Activated T-helper 1 cell treated with anti-CD3 and anti-CD28 coated beads, Interleukin-12 subunit alpha, Interleukin-12 subunit beta, Interleukin-2, Interleukin-4 antibody, amounts not matched to agents 30 ng/mL and 10 ng/mL and 1 ng/mL, durations not matched to agents 14 hours and 24 hours and 36 hours (primary cell): ENCODE measurements at regions of chr10 and their contacts with region 1.

Region 1: GRCh38 chr10:75019370-75019769 is 92.1 kb upstream of the SAMD8 start:
- DNase-seq: no peak
- H3K4me3 Mint-ChIP-seq: no peak overlapping the region
- H3K27ac Mint-ChIP-seq: no peak overlapping the region
- H3K4me1 Mint-ChIP-seq: peaks cover 43% of the 10 kb centered on the region
- H3K27me3 Mint-ChIP-seq: no peaks in the 10 kb centered on the region

Region 2: GRCh38 chr10:74244097-74244685 is 775.2 kb before region 1 on chr10:
- intact Hi-C with region 1: loop called (anchors 1 kb)
- DNase-seq: no peak
- H3K4me3 Mint-ChIP-seq: no peak overlapping the region
- H3K27ac Mint-ChIP-seq: no peak overlapping the region
- H3K4me1 Mint-ChIP-seq: no peaks in the 10 kb centered on the region
- H3K27me3 Mint-ChIP-seq: no peaks in the 10 kb centered on the region

Region 3: GRCh38 chr10:74419958-74420375 is 599.4 kb before region 1 on chr10:
- intact Hi-C with region 1: loop called (anchors 2 kb)
- DNase-seq: peak; percentile 2
- H3K4me3 Mint-ChIP-seq: no peak overlapping the region
- H3K27ac Mint-ChIP-seq: no peak overlapping the region
- H3K4me1 Mint-ChIP-seq: peaks cover 9% of the 10 kb centered on the region
- H3K27me3 Mint-ChIP-seq: no peaks in the 10 kb centered on the region

Region 4: GRCh38 chr10:74738985-74739567 is 280.3 kb before region 1 on chr10:
- intact Hi-C with region 1: loop called (anchors 1 kb)
- DNase-seq: peak; percentile 14
- H3K4me3 Mint-ChIP-seq: peak overlapping the region; percentile 42
- H3K27ac Mint-ChIP-seq: peak overlapping the region; percentile 44
- H3K4me1 Mint-ChIP-seq: peaks cover 26% of the 10 kb centered on the region
- H3K27me3 Mint-ChIP-seq: no peaks in the 10 kb centered on the region

Region 5: DNA sequence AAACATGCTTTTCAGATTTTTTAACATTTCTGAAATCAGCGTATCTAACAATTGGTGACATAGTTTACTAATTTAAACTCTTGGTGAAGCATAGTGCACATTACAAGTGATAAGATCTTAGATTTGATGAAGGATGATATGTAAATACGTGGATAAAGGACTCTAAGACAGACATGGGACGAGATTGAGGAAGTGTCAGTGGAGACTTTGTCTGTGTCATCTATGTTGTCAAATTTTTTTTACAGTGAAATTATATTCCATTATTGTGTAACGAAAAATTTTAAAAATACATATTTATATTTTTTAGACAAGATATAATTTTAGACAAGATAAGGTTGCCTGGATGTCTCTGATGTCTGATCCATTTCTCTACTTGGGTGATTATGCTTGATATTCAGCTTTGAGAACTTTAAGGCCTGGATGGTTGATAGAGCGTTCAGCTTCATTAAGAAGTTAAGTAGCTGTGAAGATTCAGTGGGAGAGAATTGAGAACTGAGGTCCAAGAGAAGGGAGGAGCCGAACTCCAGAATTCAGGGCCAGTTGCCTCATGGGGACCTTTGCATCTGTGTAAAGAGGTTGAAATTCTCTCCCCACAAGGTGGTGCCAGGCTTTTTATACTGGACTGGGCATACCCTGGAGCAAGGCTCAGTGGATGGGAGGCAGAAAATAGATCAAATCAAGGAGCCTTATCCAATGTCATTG is 130.3 kb before region 1 on chr10:
- intact Hi-C with region 1: loop called (anchors 1 kb)
- DNase-seq: no peak
- H3K4me3 Mint-ChIP-seq: no peak overlapping the region
- H3K27ac Mint-ChIP-seq: peak overlapping the region; percentile 16
- H3K4me1 Mint-ChIP-seq: peaks cover 14% of the 10 kb centered on the region
- H3K27me3 Mint-ChIP-seq: peaks cover 2% of the 10 kb centered on the region

Region 6: GRCh38 chr10:75070961-75071428 is 51.6 kb after region 1 on chr10:
- intact Hi-C with region 1: no loop called
- DNase-seq: no peak
- H3K4me3 Mint-ChIP-seq: no peak overlapping the region
- H3K27ac Mint-ChIP-seq: no peak overlapping the region
- H3K4me1 Mint-ChIP-seq: peaks cover 19% of the 10 kb centered on the region
- H3K27me3 Mint-ChIP-seq: no peaks in the 10 kb centered on the region

Region 7: GRCh38 chr10:75099952-75100763 is 80.8 kb after region 1 on chr10:
- intact Hi-C with region 1: loop called (anchors 1 kb)
- DNase-seq: peak; percentile 67
- H3K4me3 Mint-ChIP-seq: no peak overlapping the region
- H3K27ac Mint-ChIP-seq: no peak overlapping the region
- H3K4me1 Mint-ChIP-seq: peaks cover 5% of the 10 kb centered on the region
- H3K27me3 Mint-ChIP-seq: no peaks in the 10 kb centered on the region